Endothelial cell of umbilical vein (primary cell): ENCODE measurements at regions of chr4 and their contacts with region 1.

Region 1: GRCh38 chr4:184310171-184310567 is 92.5 kb upstream of the ENPP6 start:
- DNase-seq: peak; percentile 28
- H3K4me3 ChIP-seq: no peak overlapping the region
- H3K27ac ChIP-seq: peak overlapping the region; percentile 21
- H3K4me1 ChIP-seq: no peaks in the 10 kb centered on the region
- H3K27me3 ChIP-seq: no peaks in the 10 kb centered on the region
- CTCF ChIP-seq: peak; percentile 20 to 22
- POLR2A ChIP-seq: no peak

Region 2: GRCh38 chr4:184355111-184355604 is 45.0 kb after region 1 on chr4:
- CTCF ChIA-PET with region 1: no interaction called
- POLR2A ChIA-PET with region 1: no interaction called
- dilution Hi-C with region 1: no loop called
- intact Hi-C with region 1: loop called (anchors 1 kb)
- DNase-seq: peak; percentile 98
- H3K4me3 ChIP-seq: no peak overlapping the region
- H3K27ac ChIP-seq: peak overlapping the region; percentile 72
- H3K4me1 ChIP-seq: peaks cover 13% of the 10 kb centered on the region
- H3K27me3 ChIP-seq: no peaks in the 10 kb centered on the region
- CTCF ChIP-seq: no peak
- POLR2A ChIP-seq: peak; percentile 73

Region 3: DNA sequence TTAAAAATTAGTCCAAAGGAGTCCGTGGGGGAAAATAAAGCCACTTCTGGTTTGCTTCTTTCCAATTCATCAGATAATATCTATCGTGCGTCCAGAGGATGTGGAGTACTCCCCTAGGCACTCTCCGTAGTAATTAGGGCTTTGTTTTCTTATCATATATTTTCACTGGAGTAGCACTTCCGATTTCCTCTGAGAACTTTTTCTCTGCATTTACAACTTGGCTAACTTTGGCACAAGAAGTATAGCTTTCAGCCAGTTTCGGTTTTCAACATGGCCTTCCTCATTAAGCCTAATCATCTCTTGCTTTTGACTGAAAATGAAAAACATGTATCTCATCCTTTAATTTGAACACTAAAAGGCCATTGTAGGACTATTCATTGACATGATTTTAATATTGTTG is 258.6 kb after region 1 on chr4:
- CTCF ChIA-PET with region 1: no interaction called
- POLR2A ChIA-PET with region 1: no interaction called
- dilution Hi-C with region 1: no loop called
- intact Hi-C with region 1: loop called (anchors 1 kb)
- DNase-seq: peak; percentile 84
- H3K4me3 ChIP-seq: peak overlapping the region in 1 of 3 experiments; percentile 32
- H3K27ac ChIP-seq: peak overlapping the region; percentile 51
- H3K4me1 ChIP-seq: peaks cover 28% of the 10 kb centered on the region
- H3K27me3 ChIP-seq: no peaks in the 10 kb centered on the region
- CTCF ChIP-seq: no peak
- POLR2A ChIP-seq: no peak

Region 4: GRCh38 chr4:184733654-184734524 is 423.7 kb after region 1 on chr4 and contains the start of gene CENPU:
- CTCF ChIA-PET with region 1: no interaction called
- POLR2A ChIA-PET with region 1: no interaction called
- dilution Hi-C with region 1: no loop called
- intact Hi-C with region 1: loop called (anchors 1 kb)
- DNase-seq: peak; percentile 99
- H3K4me3 ChIP-seq: peak within 1 kb of the TSS; percentile 75 to 91 (median 88)
- H3K27ac ChIP-seq: peak within 1 kb of the TSS; percentile 72
- H3K4me1 ChIP-seq: peaks cover 16% of the 10 kb centered on the region
- H3K27me3 ChIP-seq: no peaks in the 10 kb centered on the region
- CTCF ChIP-seq: no peak
- POLR2A ChIP-seq: peak; percentile 68
- total RNA-seq, gene CENPU: 35.6 and 37.9 TPM in 2 replicates